ENCODE measurements at regions of chr16 and their contacts with region 1.

Region 1: GRCh38 chr16:66315210-66315825 is 51.2 kb upstream of the CDH5 start:
- DNase-seq: no peak
- H3K4me3 ChIP-seq: no peak overlapping the region
- H3K27ac ChIP-seq: peak overlapping the region in 1 of 4 donors; percentile 18
- H3K4me1 ChIP-seq: peaks cover 0 to 12% (median 6%) of the 10 kb centered on the region in 4 donors
- H3K27me3 ChIP-seq: no peaks in the 10 kb centered on the region
- CTCF ChIP-seq: peak in 2 of 3 experiments; percentile 85 to 92
- EP300 ChIP-seq: no peak
- POLR2A ChIP-seq: no peak

Region 2: GRCh38 chr16:66045626-66046025 is 269.7 kb before region 1 on chr16:
- intact Hi-C with region 1: no loop called
- DNase-seq: no peak
- H3K4me3 ChIP-seq: no peak overlapping the region
- H3K27ac ChIP-seq: no peak overlapping the region
- H3K4me1 ChIP-seq: no peaks in the 10 kb centered on the region
- H3K27me3 ChIP-seq: no peaks in the 10 kb centered on the region
- CTCF ChIP-seq: no peak
- EP300 ChIP-seq: no peak
- POLR2A ChIP-seq: no peak

Region 3: GRCh38 chr16:66250686-66251431 is 64.5 kb before region 1 on chr16:
- intact Hi-C with region 1: no loop called
- DNase-seq: peak; percentile 95
- H3K4me3 ChIP-seq: no peak overlapping the region
- H3K27ac ChIP-seq: peak overlapping the region; percentile 7 to 62 (median 46)
- H3K4me1 ChIP-seq: peaks cover 10 to 33% (median 27%) of the 10 kb centered on the region in 4 donors
- H3K27me3 ChIP-seq: no peaks in the 10 kb centered on the region
- CTCF ChIP-seq: no peak
- EP300 ChIP-seq: no peak
- POLR2A ChIP-seq: no peak

Region 4: GRCh38 chr16:66275775-66276428 is 39.4 kb before region 1 on chr16:
- intact Hi-C with region 1: loop called (anchors 2 kb)
- DNase-seq: no peak
- H3K4me3 ChIP-seq: no peak overlapping the region
- H3K27ac ChIP-seq: no peak overlapping the region
- H3K4me1 ChIP-seq: peaks cover 0 to 4% (median 0%) of the 10 kb centered on the region in 4 donors
- H3K27me3 ChIP-seq: no peaks in the 10 kb centered on the region
- CTCF ChIP-seq: peak; percentile 46 to 64 (median 51)
- EP300 ChIP-seq: no peak
- POLR2A ChIP-seq: no peak